Activated CD8-positive, alpha-beta T cell treated with anti-CD3 and anti-CD28 coated beads for 36 hours (primary cell): ENCODE measurements at regions of chr21 and their contacts with region 1.

Region 1: DNA sequence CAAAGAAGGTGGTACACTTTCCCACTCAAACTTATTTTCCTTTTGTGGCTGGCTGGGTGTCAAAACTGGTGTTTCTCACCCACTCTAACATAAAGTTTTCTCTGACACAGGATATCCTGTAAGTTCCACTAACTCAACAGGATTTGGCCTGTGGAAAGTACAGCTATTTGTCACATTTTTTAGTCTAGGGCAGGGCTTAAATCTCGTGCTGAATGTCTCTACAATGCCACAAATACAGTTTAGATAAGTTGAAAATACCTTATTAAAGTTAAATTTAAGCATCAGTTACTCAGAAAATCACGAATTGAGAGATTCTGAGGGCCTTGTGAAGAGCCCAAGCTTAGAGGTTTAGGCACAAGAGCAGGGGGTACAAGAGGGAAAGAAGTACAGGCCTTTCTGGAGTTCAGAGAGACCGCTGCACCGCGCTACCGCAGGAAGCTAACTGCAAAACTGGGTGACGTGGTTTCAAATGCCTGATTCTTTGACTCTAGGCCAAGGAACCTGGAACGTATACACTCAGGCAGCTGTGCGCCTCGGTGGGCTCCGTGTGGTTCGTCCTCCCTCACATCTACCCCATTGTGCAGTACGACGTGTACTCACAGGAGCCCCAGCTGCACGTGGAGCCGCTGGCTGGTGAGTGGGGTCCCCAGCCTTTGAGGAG is 23.4 kb upstream of the PWP2 start:
- DNase-seq: peak; percentile 91
- ATAC-seq: peak; percentile 80
- H3K4me3 Mint-ChIP-seq: peak overlapping the region; percentile 78
- H3K27ac Mint-ChIP-seq: peak overlapping the region; percentile 97
- H3K4me1 Mint-ChIP-seq: peaks cover 87% of the 10 kb centered on the region
- H3K27me3 Mint-ChIP-seq: no peaks in the 10 kb centered on the region
- CTCF ChIP-seq: no peak

Region 2: GRCh38 chr21:44011980-44012527 is 71.7 kb before region 1 on chr21 and contains the start of gene TRAPPC10:
- CTCF ChIA-PET with region 1: interaction called, 17 read pairs
- POLR2A ChIA-PET with region 1: interaction called, 35 read pairs
- intact Hi-C with region 1: no loop called
- DNase-seq: peak; percentile 83
- ATAC-seq: peak; percentile 72
- H3K4me3 Mint-ChIP-seq: peak within 1 kb of the TSS; percentile 80
- H3K27ac Mint-ChIP-seq: peak within 1 kb of the TSS; percentile 96
- H3K4me1 Mint-ChIP-seq: peaks cover 41% of the 10 kb centered on the region
- H3K27me3 Mint-ChIP-seq: no peaks in the 10 kb centered on the region
- CTCF ChIP-seq: no peak
- total RNA-seq, gene TRAPPC10: 44.1 to 45.4 TPM

Region 3: DNA sequence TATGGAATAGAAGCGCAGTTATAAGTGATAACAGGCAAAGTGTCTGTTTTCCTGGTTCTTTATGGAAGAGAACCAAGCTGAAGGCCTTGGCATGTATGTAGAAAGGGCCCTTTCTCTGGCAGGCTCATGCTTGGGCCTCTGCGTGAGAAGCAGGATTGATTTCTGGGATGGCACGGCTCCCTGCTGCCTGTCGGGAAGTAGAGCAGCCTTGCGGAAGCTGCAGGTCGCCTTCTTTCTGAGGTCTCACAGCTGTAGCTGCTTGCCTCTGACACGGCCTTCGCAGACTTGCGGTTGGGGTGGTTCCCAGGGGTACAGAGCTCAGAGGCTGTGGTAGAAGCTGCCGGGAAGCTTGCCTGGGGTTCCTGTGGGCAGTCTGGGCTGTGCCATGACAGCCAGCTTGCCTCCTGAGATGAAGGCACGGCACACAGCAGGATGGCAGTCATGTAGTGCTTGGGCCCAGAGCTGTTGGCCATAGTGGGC is 32.3 kb before region 1 on chr21:
- CTCF ChIA-PET with region 1: no interaction called
- POLR2A ChIA-PET with region 1: no interaction called
- intact Hi-C with region 1: no loop called
- DNase-seq: no peak
- ATAC-seq: no peak
- H3K4me3 Mint-ChIP-seq: no peak overlapping the region
- H3K27ac Mint-ChIP-seq: no peak overlapping the region
- H3K4me1 Mint-ChIP-seq: peaks cover 8% of the 10 kb centered on the region
- H3K27me3 Mint-ChIP-seq: no peaks in the 10 kb centered on the region
- CTCF ChIP-seq: no peak

Region 4: DNA sequence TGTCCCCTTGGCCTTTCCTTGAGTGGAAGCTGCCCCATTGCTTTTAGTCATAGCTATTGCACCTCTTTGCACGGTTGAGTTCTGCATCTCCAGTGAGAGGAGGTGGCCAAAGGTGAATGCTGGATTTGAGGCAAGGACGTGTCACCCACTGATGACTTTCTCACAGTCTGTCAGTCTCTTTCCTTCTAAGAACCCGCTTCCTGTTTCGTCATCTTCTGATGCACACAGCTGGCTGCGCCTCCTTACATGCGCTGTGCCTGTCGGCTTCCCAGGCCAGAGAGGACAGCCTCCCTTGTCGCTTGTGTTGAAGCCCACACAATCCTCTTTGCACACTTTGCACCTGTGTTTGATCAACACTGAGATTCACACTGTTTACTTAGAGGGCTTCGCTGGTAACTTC is 18.3 kb before region 1 on chr21:
- CTCF ChIA-PET with region 1: no interaction called
- POLR2A ChIA-PET with region 1: interaction called, 20 read pairs
- intact Hi-C with region 1: loop called (anchors 2 kb)
- DNase-seq: peak; percentile 90
- ATAC-seq: peak; percentile 95
- H3K4me3 Mint-ChIP-seq: peak overlapping the region; percentile 59
- H3K27ac Mint-ChIP-seq: peak overlapping the region; percentile 96
- H3K4me1 Mint-ChIP-seq: peaks cover 46% of the 10 kb centered on the region
- H3K27me3 Mint-ChIP-seq: no peaks in the 10 kb centered on the region
- CTCF ChIP-seq: no peak

Region 5: GRCh38 chr21:44199465-44199864 is 115.7 kb after region 1 on chr21:
- CTCF ChIA-PET with region 1: no interaction called
- POLR2A ChIA-PET with region 1: no interaction called
- intact Hi-C with region 1: no loop called
- DNase-seq: peak; percentile 1
- ATAC-seq: no peak
- H3K4me3 Mint-ChIP-seq: no peak overlapping the region
- H3K27ac Mint-ChIP-seq: no peak overlapping the region
- H3K4me1 Mint-ChIP-seq: no peaks in the 10 kb centered on the region
- H3K27me3 Mint-ChIP-seq: no peaks in the 10 kb centered on the region
- CTCF ChIP-seq: no peak